Activated CD4-positive, alpha-beta memory T cell treated with anti-CD3 and anti-CD28 coated beads for 36 hours (primary cell): ENCODE measurements at regions of chr6 and their contacts with region 1.

Region 1: GRCh38 chr6:157764178-157765033 is 58.6 kb upstream of the SNX9 start:
- DNase-seq: peak; percentile 93
- H3K4me3 Mint-ChIP-seq: peak overlapping the region; percentile 52
- H3K27ac Mint-ChIP-seq: peak overlapping the region; percentile 89
- H3K4me1 Mint-ChIP-seq: peaks cover 78% of the 10 kb centered on the region
- H3K27me3 Mint-ChIP-seq: no peaks in the 10 kb centered on the region

Region 2: DNA sequence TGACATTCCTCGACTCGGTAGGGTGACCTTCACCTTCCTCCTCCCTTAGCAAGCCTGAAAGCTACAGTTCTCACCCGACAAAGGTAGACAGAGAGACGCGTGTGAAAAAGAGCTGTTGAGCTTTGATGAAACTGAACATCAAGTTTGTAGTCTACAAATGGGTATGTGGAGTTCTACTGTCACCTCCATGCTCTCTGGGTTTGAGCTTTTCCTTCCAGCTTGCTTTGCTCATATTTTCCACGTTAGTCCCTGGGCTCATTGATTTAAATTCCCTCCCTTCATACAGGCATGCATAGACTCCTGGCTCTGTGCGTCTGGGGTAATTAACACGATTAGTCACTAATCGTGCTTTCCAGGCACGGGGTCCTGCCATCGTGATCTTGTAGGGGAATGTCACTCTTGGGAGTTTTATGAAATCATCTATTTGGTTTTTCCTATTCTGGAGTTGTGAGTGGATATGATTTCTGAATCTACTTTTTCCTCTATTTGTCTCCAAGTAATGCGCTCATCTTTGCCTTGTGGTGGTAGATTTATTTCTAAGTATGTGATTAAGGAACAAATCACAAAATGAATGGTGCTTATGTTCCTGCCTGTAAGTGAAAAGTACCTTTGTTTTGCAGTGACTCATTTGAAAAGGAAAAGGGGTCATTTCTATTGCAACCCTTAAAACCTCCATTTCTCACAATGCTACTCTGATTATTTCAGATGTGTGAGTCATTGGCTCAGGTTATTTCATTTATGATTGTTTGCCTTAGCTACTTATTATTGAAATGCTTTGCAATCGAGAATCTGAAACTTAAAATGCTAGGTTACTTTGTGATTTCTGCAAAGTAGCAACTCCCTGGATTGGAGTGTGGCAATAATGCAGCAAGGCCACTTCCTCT is 228.8 kb before region 1 on chr6:
- CTCF ChIA-PET with region 1: no interaction called
- POLR2A ChIA-PET with region 1: no interaction called
- intact Hi-C with region 1: loop called (anchors 5 kb)
- DNase-seq: peak; percentile 45
- H3K4me3 Mint-ChIP-seq: no peak overlapping the region
- H3K27ac Mint-ChIP-seq: peak overlapping the region; percentile 53
- H3K4me1 Mint-ChIP-seq: peaks cover 24% of the 10 kb centered on the region
- H3K27me3 Mint-ChIP-seq: peaks cover 13% of the 10 kb centered on the region

Region 3: GRCh38 chr6:157861814-157862213 is 97.4 kb after region 1 on chr6:
- CTCF ChIA-PET with region 1: interaction called, 3 read pairs
- POLR2A ChIA-PET with region 1: interaction called, 5 read pairs
- intact Hi-C with region 1: loop called (anchors 1 kb)
- DNase-seq: no peak
- H3K4me3 Mint-ChIP-seq: no peak overlapping the region
- H3K27ac Mint-ChIP-seq: no peak overlapping the region
- H3K4me1 Mint-ChIP-seq: peaks cover 68% of the 10 kb centered on the region
- H3K27me3 Mint-ChIP-seq: no peaks in the 10 kb centered on the region

Region 4: GRCh38 chr6:157954150-157955117 is 190.0 kb after region 1 on chr6:
- CTCF ChIA-PET with region 1: no interaction called
- POLR2A ChIA-PET with region 1: no interaction called
- intact Hi-C with region 1: no loop called
- DNase-seq: no peak
- H3K4me3 Mint-ChIP-seq: no peak overlapping the region
- H3K27ac Mint-ChIP-seq: no peak overlapping the region
- H3K4me1 Mint-ChIP-seq: no peaks in the 10 kb centered on the region
- H3K27me3 Mint-ChIP-seq: no peaks in the 10 kb centered on the region

Region 5: GRCh38 chr6:157981395-157982296 is 217.2 kb after region 1 on chr6 and contains the start of gene SYNJ2:
- CTCF ChIA-PET with region 1: no interaction called
- POLR2A ChIA-PET with region 1: no interaction called
- intact Hi-C with region 1: loop called (anchors 5 kb)
- DNase-seq: peak; percentile 89
- H3K4me3 Mint-ChIP-seq: peak within 1 kb of the TSS; percentile 89
- H3K27ac Mint-ChIP-seq: peak within 1 kb of the TSS; percentile 74
- H3K4me1 Mint-ChIP-seq: peaks cover 36% of the 10 kb centered on the region
- H3K27me3 Mint-ChIP-seq: no peaks in the 10 kb centered on the region
- total RNA-seq, gene SYNJ2: 32.2 to 32.3 TPM

Region 6: DNA sequence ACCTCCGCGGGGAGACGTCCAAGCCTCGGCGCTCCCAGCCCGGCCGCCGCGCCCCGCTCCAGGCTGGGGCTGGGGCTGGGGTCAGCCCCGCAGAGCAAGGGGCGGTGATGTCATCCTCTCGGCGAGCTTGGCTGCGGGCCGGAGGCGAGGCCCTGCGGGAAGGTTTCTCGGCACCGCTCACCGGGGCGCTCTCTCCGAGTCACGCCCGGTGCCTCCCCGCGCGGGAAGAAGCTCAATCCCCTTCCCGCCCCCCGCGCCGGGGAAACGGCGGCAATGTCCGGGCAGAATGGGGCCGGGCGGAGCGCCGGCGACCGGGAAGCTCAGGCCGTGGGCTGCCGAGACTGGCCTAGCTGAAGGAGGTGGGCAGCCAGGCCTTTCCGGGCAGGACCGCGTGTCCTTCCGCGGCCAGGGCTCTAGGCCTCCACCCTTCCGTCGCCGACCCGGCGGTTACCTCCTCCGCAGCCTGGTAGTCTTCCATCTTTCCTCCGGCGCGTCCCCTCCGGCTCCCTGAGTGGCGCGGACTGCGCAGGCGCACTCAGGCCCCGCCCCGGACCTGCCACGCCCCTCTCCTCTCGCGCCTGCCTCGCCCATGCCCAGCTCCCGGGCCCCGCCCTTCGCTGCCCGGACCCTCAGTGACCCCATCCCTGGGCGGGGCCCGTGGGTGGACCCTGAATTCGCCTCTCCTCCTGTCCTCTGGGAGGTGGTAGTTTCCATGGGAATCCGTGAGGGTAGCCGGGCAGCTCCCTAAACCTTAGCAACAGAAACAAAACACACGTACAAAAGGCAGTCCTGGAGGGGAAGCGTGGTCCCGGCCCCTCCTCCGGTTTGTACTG is 880.0 kb after region 1 on chr6 and contains the start of gene DYNLT1:
- CTCF ChIA-PET with region 1: no interaction called
- POLR2A ChIA-PET with region 1: no interaction called
- intact Hi-C with region 1: loop called (anchors 5 kb)
- DNase-seq: peak; percentile 95
- H3K4me3 Mint-ChIP-seq: peak within 1 kb of the TSS; percentile 97
- H3K27ac Mint-ChIP-seq: peak within 1 kb of the TSS; percentile 100
- H3K4me1 Mint-ChIP-seq: peaks cover 80% of the 10 kb centered on the region
- H3K27me3 Mint-ChIP-seq: no peaks in the 10 kb centered on the region
- total RNA-seq, gene DYNLT1: 117 to 120 TPM